Esophagus muscularis mucosa (tissue), 4 donors: ENCODE measurements at regions of chr16 and their contacts with region 1.

Region 1: DNA sequence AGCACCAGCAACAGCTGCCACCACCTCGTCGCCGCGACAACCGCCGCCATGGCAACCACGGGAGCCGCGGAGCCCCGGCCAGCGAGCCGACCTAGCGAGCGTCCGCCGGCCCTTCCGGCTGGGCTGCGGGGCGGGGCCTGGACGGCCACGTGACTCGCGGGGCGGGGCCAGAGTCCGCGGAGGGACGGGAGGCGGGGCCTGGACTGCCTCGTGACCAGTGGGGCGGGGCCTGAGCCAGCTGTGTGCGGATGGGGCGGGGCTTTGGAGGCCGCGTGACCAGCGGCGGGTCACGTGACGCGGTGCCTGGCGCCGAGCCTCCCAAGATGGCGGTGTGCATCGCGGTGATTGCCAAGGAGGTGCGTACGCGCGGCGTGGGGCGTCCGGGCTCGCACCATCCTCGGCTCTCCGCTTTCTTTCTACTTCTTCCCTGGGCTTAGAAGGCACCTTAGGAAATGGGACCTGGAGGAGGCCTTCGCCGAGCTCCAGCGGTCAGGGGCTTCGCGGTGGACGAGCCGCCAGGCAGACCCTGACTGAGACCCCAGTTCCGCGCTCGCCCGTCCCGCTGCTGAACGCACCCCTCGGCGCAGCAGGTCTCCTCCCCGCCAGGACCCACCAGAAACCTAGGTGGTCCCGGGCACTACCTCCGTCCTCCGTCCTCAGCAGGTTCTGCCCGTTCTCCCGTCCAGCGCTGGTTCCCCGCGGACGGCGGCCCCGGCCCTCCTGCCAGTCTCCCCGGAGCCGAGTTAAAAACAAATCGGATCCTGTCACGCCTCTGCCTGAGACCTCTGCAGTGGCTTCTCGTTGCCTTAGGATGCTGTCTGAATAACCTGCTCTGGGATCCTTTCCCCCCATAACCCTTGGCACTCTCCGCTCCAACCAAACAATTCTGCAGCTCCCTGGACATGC is at the starts of genes GALNS and TRAPPC2L:
- DNase-seq: peak; percentile 100
- H3K4me3 ChIP-seq: peak within 1 kb of the TSS; percentile 81 to 99 (median 87)
- H3K27ac ChIP-seq: peak within 1 kb of the TSS; percentile 79 to 88 (median 82)
- H3K4me1 ChIP-seq: peaks cover 23 to 49% (median 43%) of the 10 kb centered on the region in 4 donors
- H3K27me3 ChIP-seq: no peaks in the 10 kb centered on the region
- CTCF ChIP-seq: no peak
- EP300 ChIP-seq: no peak
- POLR2A ChIP-seq: no peak
- total RNA-seq, gene GALNS: 9.5 to 19.1 (median 11.0) TPM
- total RNA-seq, gene TRAPPC2L: 22.9 to 35.8 (median 29.6) TPM

Region 2: GRCh38 chr16:88743693-88744576 is 113.1 kb before region 1 on chr16:
- intact Hi-C with region 1: loop called (anchors 5 kb)
- DNase-seq: no peak
- H3K4me3 ChIP-seq: no peak overlapping the region
- H3K27ac ChIP-seq: peak overlapping the region in 3 of 4 donors; percentile 18 to 84 (median 53)
- H3K4me1 ChIP-seq: peaks cover 37 to 56% (median 53%) of the 10 kb centered on the region in 4 donors
- H3K27me3 ChIP-seq: no peaks in the 10 kb centered on the region
- CTCF ChIP-seq: peak in 2 of 3 experiments; percentile 88
- EP300 ChIP-seq: no peak
- POLR2A ChIP-seq: no peak

Region 3: GRCh38 chr16:88811769-88812512 is 45.1 kb before region 1 on chr16 and contains the start of gene APRT:
- intact Hi-C with region 1: loop called (anchors 2 kb)
- DNase-seq: peak; percentile 99
- H3K4me3 ChIP-seq: peak within 1 kb of the TSS; percentile 77 to 90 (median 81)
- H3K27ac ChIP-seq: peak within 1 kb of the TSS; percentile 86 to 97 (median 92)
- H3K4me1 ChIP-seq: peaks cover 26 to 45% (median 40%) of the 10 kb centered on the region in 4 donors
- H3K27me3 ChIP-seq: no peaks in the 10 kb centered on the region
- CTCF ChIP-seq: peak; percentile 20 to 44 (median 28)
- EP300 ChIP-seq: no peak
- POLR2A ChIP-seq: peak; percentile 33
- total RNA-seq, gene APRT: 60.6 to 141 (median 98.6) TPM